Thyroid gland (tissue), 4 donors: ENCODE measurements at regions of chr7 and their contacts with region 1.

Region 1: DNA sequence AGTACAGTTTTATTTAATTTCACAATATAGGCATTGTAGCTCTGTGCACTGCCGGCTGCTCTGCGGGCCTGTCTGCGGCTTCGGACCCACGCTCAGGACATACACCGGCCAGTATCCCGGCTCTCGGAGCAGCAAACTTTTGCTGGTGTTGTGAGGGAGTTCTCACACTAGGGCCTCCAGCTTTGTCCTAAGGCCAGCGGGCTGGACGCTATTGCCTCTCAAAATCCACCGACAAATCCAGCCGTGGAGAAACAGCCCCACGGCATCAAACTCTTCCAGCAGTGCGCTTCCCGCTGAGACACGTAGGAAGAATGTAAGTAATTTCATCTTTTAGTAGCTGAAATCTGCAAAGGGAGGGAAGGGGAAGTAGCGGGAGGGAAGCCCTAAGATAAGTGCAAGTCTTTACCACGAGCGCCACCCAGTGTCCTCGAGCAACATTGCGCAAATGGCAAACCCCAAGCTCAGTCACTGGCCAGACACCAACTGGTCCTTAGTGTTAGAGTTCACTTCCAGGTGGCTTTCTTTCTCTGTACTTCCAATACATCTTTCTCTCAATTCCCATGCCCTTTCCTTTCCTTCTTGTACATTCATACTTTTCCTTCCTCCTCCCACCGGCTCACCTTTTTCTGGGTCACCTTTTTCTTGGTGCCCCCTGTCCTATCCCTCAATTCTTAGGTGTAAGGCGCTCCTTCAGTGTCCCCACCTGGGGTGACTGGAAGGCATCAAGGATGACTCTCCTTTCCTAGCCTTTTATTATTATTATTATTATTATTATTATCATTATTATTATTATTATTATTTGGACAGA is 3.0 kb upstream of the DLX5 start:
- DNase-seq: peak; percentile 70 to 79
- H3K4me3 ChIP-seq: peak overlapping the region in 1 of 3 donors; percentile 13
- H3K27ac ChIP-seq: no peak overlapping the region
- H3K4me1 ChIP-seq: peaks cover 6 to 22% of the 10 kb centered on the region in 2 donors
- H3K27me3 ChIP-seq: peaks cover 17% of the 10 kb centered on the region
- CTCF ChIP-seq: peak; percentile 43 to 83 (median 71)
- POLR2A ChIP-seq: no peak

Region 2: GRCh38 chr7:96075510-96076349 is 951.9 kb before region 1 on chr7:
- intact Hi-C with region 1: loop called (anchors 5 kb)
- DNase-seq: peak; percentile 58 to 66
- H3K4me3 ChIP-seq: peak overlapping the region; percentile 2 to 40 (median 36)
- H3K27ac ChIP-seq: no peak overlapping the region
- H3K4me1 ChIP-seq: peaks cover 6 to 7% of the 10 kb centered on the region in 2 donors
- H3K27me3 ChIP-seq: no peaks in the 10 kb centered on the region
- CTCF ChIP-seq: peak; percentile 46 to 81 (median 76)
- POLR2A ChIP-seq: no peak